Activated naive CD4-positive, alpha-beta T cell treated with anti-CD3 and anti-CD28 coated beads for 36 hours (primary cell): ENCODE measurements at regions of chr1 and their contacts with region 1.

Region 1: GRCh38 chr1:181088079-181089016 is at the start of gene IER5:
- DNase-seq: peak; percentile 96
- H3K4me3 Mint-ChIP-seq: peak within 1 kb of the TSS; percentile 99
- H3K27ac Mint-ChIP-seq: peak within 1 kb of the TSS; percentile 99
- H3K4me1 Mint-ChIP-seq: peaks cover 44% of the 10 kb centered on the region
- H3K27me3 Mint-ChIP-seq: no peaks in the 10 kb centered on the region
- total RNA-seq, gene IER5: 33.5 to 34.4 TPM

Region 2: DNA sequence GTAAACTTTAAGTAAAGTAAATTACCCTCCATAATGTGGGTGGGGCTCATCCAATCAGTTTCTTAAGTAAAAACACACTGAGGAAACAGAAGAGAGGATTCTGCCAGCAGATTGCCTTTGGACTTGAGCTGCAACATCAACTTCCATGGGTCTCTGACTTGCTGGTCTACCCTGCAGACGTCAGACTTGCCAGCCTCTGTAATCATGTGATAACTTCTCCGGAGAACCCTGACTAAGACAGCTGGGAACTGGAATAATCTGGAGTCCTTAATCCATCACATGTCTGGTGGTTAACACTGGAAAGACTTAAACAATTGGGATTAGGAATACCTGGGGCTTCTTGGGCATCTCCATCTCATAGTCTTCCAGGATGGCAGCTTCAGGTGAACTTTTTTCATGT is 1146.9 kb before region 1 on chr1:
- CTCF ChIA-PET with region 1: no interaction called
- intact Hi-C with region 1: no loop called
- DNase-seq: no peak
- H3K4me3 Mint-ChIP-seq: no peak overlapping the region
- H3K27ac Mint-ChIP-seq: no peak overlapping the region
- H3K4me1 Mint-ChIP-seq: no peaks in the 10 kb centered on the region
- H3K27me3 Mint-ChIP-seq: no peaks in the 10 kb centered on the region

Region 3: DNA sequence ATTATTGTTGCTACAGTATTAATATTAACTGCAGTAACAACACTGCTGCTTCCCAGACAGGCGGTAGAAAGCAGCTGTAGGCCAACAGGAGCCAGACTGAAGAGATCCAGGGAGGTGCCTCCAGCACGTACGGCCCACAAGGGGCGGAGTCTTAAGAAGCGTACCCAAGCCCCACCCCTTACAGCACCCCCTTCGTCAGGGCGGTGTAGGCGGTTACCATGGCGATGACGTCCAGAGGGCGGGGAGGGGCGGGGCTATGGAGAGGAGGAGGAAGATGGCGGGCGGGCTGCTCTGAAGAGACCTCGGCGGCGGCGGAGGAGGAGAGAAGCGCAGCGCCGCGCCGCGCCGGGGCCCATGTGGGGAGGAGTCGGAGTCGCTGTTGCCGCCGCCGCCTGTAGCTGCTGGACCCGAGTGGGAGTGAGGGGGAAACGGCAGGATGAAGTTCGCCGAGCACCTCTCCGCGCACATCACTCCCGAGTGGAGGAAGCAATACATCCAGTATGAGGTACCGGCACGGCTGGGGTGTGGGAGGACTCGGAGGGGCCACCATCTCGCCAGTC is 456.5 kb before region 1 on chr1 and contains the start of gene XPR1:
- CTCF ChIA-PET with region 1: no interaction called
- intact Hi-C with region 1: loop called (anchors 2 kb)
- DNase-seq: peak; percentile 99
- H3K4me3 Mint-ChIP-seq: no peak within 1 kb of the TSS
- H3K27ac Mint-ChIP-seq: peak within 1 kb of the TSS; percentile 77
- H3K4me1 Mint-ChIP-seq: peaks cover 12% of the 10 kb centered on the region
- H3K27me3 Mint-ChIP-seq: no peaks in the 10 kb centered on the region
- total RNA-seq, gene XPR1: 14.8 to 18.1 TPM

Region 4: GRCh38 chr1:181021811-181022434 is 66.4 kb before region 1 on chr1:
- CTCF ChIA-PET with region 1: interaction called, 7 read pairs
- intact Hi-C with region 1: loop called (anchors 1 kb)
- DNase-seq: peak; percentile 78
- H3K4me3 Mint-ChIP-seq: peak overlapping the region; percentile 86
- H3K27ac Mint-ChIP-seq: peak overlapping the region; percentile 94
- H3K4me1 Mint-ChIP-seq: peaks cover 35% of the 10 kb centered on the region
- H3K27me3 Mint-ChIP-seq: no peaks in the 10 kb centered on the region

Region 5: DNA sequence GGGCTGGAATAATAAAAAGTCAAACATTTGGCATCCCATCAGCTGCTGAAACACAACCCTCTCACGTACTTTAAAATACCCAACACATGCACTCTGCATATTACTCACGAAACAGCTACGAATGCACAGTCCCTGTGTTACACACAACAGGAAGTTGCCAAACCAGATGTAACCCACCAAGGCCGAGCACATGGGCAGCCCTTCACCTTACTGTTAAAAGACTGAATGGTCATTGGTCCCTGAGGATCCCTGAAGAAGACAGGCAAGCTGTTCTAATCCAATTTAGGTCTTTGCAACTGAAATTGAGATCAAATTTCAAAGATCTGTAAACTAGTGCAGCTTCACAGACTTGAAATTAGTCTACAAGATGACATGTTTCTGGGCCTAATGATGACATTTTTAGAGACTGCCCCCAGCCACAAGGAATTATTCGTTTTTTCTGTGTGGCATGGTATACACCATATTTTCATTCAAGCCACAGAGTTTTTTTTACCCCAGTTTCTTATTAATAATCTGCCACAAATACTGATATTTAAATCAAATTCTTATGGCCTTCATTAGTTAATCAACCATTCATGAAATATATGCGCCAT is 25.4 kb before region 1 on chr1:
- CTCF ChIA-PET with region 1: interaction called, 3 read pairs
- intact Hi-C with region 1: loop called (anchors 2 kb)
- DNase-seq: peak; percentile 57
- H3K4me3 Mint-ChIP-seq: peak overlapping the region; percentile 22
- H3K27ac Mint-ChIP-seq: peak overlapping the region; percentile 3
- H3K4me1 Mint-ChIP-seq: peaks cover 17% of the 10 kb centered on the region
- H3K27me3 Mint-ChIP-seq: no peaks in the 10 kb centered on the region

Region 6: GRCh38 chr1:181134543-181135362 is 46.4 kb after region 1 on chr1:
- CTCF ChIA-PET with region 1: interaction called, 129 read pairs
- intact Hi-C with region 1: loop called (anchors 1 kb)
- DNase-seq: peak; percentile 68
- H3K4me3 Mint-ChIP-seq: peak overlapping the region; percentile 25
- H3K27ac Mint-ChIP-seq: peak overlapping the region; percentile 90
- H3K4me1 Mint-ChIP-seq: peaks cover 39% of the 10 kb centered on the region
- H3K27me3 Mint-ChIP-seq: peaks cover 6% of the 10 kb centered on the region

Region 7: DNA sequence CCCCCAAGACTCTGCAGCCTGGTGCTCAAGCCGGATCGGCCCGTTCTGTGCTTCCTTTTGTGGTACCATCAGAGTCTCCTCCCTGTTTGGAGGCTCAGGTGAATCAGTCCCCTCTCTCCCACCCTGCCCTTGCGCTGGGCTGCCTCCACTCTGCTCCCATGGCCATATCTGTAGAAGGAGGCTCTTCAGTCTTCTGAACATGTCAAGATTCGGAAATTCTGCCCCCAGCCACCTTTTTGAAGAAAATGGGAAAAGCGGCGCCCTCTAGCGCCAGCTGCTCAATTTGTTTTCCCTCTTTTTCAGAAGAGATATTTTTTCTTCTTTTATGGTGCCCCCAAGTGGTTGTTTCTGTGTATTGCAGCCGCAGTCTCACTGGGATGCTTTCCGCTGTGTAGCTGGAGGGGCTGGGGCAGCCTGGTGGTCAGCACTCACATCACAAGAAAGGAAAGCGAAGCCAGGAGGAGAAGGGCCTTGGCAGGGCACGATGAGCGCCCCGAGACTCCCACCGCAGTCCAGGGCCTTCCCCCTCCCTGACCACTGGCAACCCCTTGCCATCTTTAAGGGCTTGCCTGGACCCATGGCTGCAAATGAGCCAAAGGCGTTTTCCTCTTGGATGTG is 336.5 kb after region 1 on chr1:
- CTCF ChIA-PET with region 1: no interaction called
- intact Hi-C with region 1: loop called (anchors 2 kb)
- DNase-seq: peak; percentile 91
- H3K4me3 Mint-ChIP-seq: peak overlapping the region; percentile 46
- H3K27ac Mint-ChIP-seq: no peak overlapping the region
- H3K4me1 Mint-ChIP-seq: peaks cover 16% of the 10 kb centered on the region
- H3K27me3 Mint-ChIP-seq: peaks cover 17% of the 10 kb centered on the region